Mammary epithelial cell (primary cell): ENCODE measurements at regions of chr2 and their contacts with region 1.

Region 1: GRCh38 chr2:39124000-39124745 is 3.3 kb upstream of the SOS1 start:
- DNase-seq: peak; percentile 92
- H3K4me3 ChIP-seq: peak overlapping the region; percentile 51 to 97 (median 84)
- H3K27ac ChIP-seq: peak overlapping the region; percentile 93
- H3K4me1 ChIP-seq: peaks cover 23% of the 10 kb centered on the region
- H3K27me3 ChIP-seq: no peaks in the 10 kb centered on the region
- CTCF ChIP-seq: peak; percentile 27 to 64

Region 2: GRCh38 chr2:38875576-38876367 is 248.4 kb before region 1 on chr2 and contains the starts of genes DHX57 and MORN2:
- CTCF ChIA-PET with region 1: no interaction called
- dilution Hi-C with region 1: no loop called
- in situ Hi-C with region 1: no loop called
- intact Hi-C with region 1: loop called (anchors 10 kb)
- DNase-seq: peak; percentile 84
- H3K4me3 ChIP-seq: peak within 1 kb of the TSS; percentile 70 to 90 (median 78)
- H3K27ac ChIP-seq: peak within 1 kb of the TSS; percentile 82
- H3K4me1 ChIP-seq: peaks cover 11% of the 10 kb centered on the region
- H3K27me3 ChIP-seq: no peaks in the 10 kb centered on the region
- CTCF ChIP-seq: no peak
- total RNA-seq, gene DHX57: 21.7 to 30.8 TPM
- total RNA-seq, gene MORN2: 9.2 to 16.3 TPM

Region 3: GRCh38 chr2:38959938-38960608 is 164.1 kb before region 1 on chr2:
- CTCF ChIA-PET with region 1: no interaction called
- dilution Hi-C with region 1: no loop called
- in situ Hi-C with region 1: no loop called
- intact Hi-C with region 1: no loop called
- DNase-seq: peak; percentile 76
- H3K4me3 ChIP-seq: peak overlapping the region in 2 of 3 experiments; percentile 35 to 39
- H3K27ac ChIP-seq: no peak overlapping the region
- H3K4me1 ChIP-seq: peaks cover 10% of the 10 kb centered on the region
- H3K27me3 ChIP-seq: no peaks in the 10 kb centered on the region
- CTCF ChIP-seq: no peak

Region 4: DNA sequence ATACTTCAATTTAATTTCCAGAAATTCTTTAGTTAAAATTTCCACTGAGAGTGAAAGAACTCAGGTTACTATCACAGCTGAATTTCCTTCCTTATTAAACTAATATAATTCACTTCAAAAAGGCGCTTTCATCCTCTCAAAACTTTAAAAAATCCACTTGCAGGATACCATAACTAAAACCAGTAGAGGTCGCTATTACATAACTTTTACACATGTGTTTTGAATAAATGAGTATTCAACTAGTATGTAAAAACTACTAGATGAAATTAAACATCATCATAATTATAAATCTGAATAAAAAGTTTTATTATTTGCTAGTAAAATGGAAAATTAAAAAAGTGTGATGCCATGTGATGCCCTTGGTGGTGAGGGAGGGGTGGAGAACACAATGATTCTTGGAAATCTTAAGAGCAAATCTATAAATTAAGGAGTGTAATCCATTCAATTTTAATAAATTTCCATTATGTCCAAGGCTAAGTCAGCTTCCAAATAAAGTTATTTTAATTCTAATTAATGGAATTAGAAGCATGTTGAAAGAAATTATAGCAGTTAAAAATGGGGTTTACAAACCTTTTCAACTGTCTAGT is 64.7 kb before region 1 on chr2:
- CTCF ChIA-PET with region 1: interaction called, 7 read pairs
- dilution Hi-C with region 1: no loop called
- in situ Hi-C with region 1: no loop called
- intact Hi-C with region 1: loop called (anchors 2 kb)
- DNase-seq: peak; percentile 23
- H3K4me3 ChIP-seq: no peak overlapping the region
- H3K27ac ChIP-seq: no peak overlapping the region
- H3K4me1 ChIP-seq: no peaks in the 10 kb centered on the region
- H3K27me3 ChIP-seq: no peaks in the 10 kb centered on the region
- CTCF ChIP-seq: peak; percentile 61 to 64

Region 5: GRCh38 chr2:39069136-39069515 is 55.0 kb before region 1 on chr2:
- CTCF ChIA-PET with region 1: no interaction called
- dilution Hi-C with region 1: no loop called
- in situ Hi-C with region 1: no loop called
- intact Hi-C with region 1: loop called (anchors 1 kb)
- DNase-seq: peak; percentile 57
- H3K4me3 ChIP-seq: no peak overlapping the region
- H3K27ac ChIP-seq: peak overlapping the region; percentile 86
- H3K4me1 ChIP-seq: peaks cover 17% of the 10 kb centered on the region
- H3K27me3 ChIP-seq: no peaks in the 10 kb centered on the region
- CTCF ChIP-seq: peak in 1 of 2 donors; percentile 24

Region 6: GRCh38 chr2:39160982-39161381 is 36.8 kb after region 1 on chr2:
- CTCF ChIA-PET with region 1: no interaction called
- dilution Hi-C with region 1: no loop called
- in situ Hi-C with region 1: no loop called
- intact Hi-C with region 1: no loop called
- DNase-seq: no peak
- H3K4me3 ChIP-seq: no peak overlapping the region
- H3K27ac ChIP-seq: no peak overlapping the region
- H3K4me1 ChIP-seq: no peaks in the 10 kb centered on the region
- H3K27me3 ChIP-seq: no peaks in the 10 kb centered on the region
- CTCF ChIP-seq: no peak

Region 7: DNA sequence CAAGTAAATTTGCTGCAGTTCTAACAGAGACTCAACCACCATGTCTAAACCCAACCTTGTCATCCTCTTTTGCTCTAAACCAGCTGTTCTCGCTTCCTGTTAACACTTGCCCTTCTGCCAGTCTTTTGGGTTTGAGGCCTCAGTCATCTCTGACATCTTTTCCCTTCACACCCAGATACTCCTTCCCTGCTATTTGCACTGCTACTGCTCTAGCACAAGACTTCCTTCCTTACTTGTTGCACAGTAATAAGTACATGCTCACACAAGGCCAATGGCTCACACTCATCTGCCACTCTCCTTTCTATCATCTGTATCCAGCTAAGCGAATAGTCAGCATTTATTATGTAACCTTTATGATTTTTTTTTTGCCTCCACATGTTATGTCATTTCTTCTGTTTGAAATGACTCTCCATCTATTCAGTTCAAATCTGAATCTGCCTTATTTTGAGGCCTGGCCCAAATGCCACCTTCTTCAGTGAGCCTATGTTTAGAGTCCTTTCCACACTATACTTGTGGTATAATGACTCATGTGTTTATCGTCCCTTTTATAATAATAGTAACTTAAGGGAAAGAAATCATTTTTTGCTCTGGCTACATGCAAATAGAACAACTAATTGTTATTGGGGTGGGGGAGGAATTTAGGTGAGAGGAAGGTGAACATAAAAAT is 142.1 kb after region 1 on chr2:
- CTCF ChIA-PET with region 1: no interaction called
- dilution Hi-C with region 1: no loop called
- in situ Hi-C with region 1: no loop called
- intact Hi-C with region 1: no loop called
- DNase-seq: peak; percentile 6
- H3K4me3 ChIP-seq: no peak overlapping the region
- H3K27ac ChIP-seq: no peak overlapping the region
- H3K4me1 ChIP-seq: no peaks in the 10 kb centered on the region
- H3K27me3 ChIP-seq: no peaks in the 10 kb centered on the region
- CTCF ChIP-seq: no peak

Region 8: DNA sequence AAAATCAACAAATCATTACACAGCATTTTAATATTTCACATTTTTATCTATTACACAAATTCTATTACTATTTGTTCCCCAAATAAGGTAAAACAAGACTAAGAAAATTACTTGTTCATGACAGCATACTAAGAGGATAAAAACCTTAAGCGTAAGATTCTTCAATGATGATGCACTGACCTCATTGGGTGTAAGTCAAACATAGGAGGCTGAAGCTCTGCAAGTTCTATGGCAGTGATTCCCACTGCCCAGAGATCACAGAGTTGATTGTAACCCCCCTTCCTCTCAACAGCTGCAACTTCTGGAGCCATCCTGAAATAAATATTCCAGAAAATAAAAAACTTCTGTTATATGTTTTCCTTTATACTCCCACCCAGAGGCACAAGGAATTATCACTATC is 201.8 kb after region 1 on chr2:
- CTCF ChIA-PET with region 1: no interaction called
- dilution Hi-C with region 1: no loop called
- in situ Hi-C with region 1: no loop called
- intact Hi-C with region 1: no loop called
- DNase-seq: no peak
- H3K4me3 ChIP-seq: no peak overlapping the region
- H3K27ac ChIP-seq: no peak overlapping the region
- H3K4me1 ChIP-seq: no peaks in the 10 kb centered on the region
- H3K27me3 ChIP-seq: no peaks in the 10 kb centered on the region
- CTCF ChIP-seq: no peak